ENCODE measurements at regions of chr5 and their contacts with region 1.

Region 1: DNA sequence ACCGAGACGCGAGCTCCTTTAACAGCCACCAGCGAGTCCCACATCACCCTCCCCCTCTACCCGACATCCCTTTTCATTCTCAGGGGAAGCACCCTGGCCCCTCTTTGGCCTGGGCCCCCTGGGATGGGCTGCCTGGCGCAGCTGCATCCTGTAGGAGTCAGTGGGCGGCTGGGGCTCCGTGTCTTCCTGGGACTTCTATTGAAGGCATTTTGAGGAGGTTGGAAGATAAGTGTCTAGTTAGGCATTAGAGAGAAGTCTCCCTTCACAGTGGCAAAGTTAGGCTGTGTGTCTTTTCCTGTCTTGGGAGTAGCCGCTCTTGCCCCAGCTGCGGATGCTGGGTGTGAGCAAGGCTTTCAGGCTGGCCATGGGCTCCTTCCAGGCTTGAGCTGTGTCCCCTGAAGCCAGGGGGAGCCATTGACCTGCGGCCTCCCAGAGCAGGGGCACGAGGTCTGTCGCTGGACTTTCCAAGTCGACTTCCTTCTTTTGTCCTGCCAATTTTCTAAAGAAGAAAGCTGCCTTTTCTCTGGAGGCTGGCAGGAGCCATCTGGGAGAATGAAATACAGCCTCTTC is 18.6 kb upstream of the NKD2 start:
- DNase-seq: peak in 1 of 2 experiments; percentile 54
- H3K4me3 ChIP-seq: no peak overlapping the region
- H3K27ac ChIP-seq: no peak overlapping the region
- H3K4me1 ChIP-seq: no peaks in the 10 kb centered on the region
- H3K27me3 ChIP-seq: no peaks in the 10 kb centered on the region
- CTCF ChIP-seq: peak; percentile 64 to 68 (median 67)
- EP300 ChIP-seq: no peak
- POLR2A ChIP-seq: no peak
- RAD21 ChIP-seq: peak; percentile 64 to 81

Region 2: DNA sequence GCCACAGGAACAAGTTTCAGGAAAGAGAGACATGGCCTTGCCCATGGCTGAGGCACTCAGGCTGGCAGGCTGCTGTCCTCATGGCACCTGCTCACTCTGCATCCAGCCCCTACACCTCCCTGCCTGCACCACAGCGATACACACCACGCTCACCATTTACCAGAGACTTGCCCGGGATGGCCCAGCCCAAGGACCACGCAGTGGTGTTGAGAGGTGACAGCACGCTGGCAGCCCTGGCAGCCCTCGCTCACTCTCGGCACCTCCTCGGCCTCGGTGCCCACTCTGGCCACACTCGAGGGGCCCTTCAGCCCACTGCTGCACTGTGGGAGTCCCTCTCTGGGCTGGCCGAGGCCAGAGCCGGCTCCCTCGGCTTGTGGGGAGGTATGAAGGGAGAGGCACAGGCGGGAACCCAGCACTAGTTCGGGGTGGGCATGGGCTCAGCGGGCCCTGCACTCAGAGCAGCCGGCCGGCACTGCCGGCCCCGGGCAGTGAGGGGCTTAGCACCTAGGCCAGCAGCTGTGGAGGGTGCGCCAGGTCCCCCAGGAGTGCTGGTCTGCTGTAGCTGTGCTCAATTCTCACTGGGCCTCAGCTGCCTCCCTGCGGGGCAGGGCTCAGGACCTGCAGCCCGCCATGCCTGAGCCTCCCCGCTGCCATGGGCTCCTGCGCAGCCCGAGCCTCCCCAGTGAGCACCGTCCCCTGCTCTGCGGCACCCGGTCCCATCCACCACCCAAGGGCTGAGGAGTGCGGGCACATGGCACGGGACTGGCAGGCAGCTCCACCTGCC is 225.9 kb before region 1 on chr5:
- CTCF ChIA-PET with region 1: no interaction called
- POLR2A ChIA-PET with region 1: no interaction called
- DNase-seq: no peak
- H3K4me3 ChIP-seq: no peak overlapping the region
- H3K27ac ChIP-seq: no peak overlapping the region
- H3K4me1 ChIP-seq: no peaks in the 10 kb centered on the region; a peak in 1 of 7 replicates
- H3K27me3 ChIP-seq: no peaks in the 10 kb centered on the region; a peak in 1 of 7 replicates
- CTCF ChIP-seq: no peak
- EP300 ChIP-seq: no peak
- POLR2A ChIP-seq: no peak
- RAD21 ChIP-seq: no peak

Region 3: GRCh38 chr5:801472-801871 is 188.6 kb before region 1 on chr5:
- CTCF ChIA-PET with region 1: no interaction called
- POLR2A ChIA-PET with region 1: no interaction called
- DNase-seq: no peak
- H3K4me3 ChIP-seq: no peak overlapping the region
- H3K27ac ChIP-seq: no peak overlapping the region
- H3K4me1 ChIP-seq: peaks cover 0 to 3% (median under 1%) of the 10 kb centered on the region in 4 experiments; a peak in 1 of 7 replicates
- H3K27me3 ChIP-seq: peaks cover 0 to 1% (median 0%) of the 10 kb centered on the region in 4 experiments; a peak in 1 of 7 replicates
- CTCF ChIP-seq: no peak
- EP300 ChIP-seq: no peak
- POLR2A ChIP-seq: no peak
- RAD21 ChIP-seq: no peak

Region 4: DNA sequence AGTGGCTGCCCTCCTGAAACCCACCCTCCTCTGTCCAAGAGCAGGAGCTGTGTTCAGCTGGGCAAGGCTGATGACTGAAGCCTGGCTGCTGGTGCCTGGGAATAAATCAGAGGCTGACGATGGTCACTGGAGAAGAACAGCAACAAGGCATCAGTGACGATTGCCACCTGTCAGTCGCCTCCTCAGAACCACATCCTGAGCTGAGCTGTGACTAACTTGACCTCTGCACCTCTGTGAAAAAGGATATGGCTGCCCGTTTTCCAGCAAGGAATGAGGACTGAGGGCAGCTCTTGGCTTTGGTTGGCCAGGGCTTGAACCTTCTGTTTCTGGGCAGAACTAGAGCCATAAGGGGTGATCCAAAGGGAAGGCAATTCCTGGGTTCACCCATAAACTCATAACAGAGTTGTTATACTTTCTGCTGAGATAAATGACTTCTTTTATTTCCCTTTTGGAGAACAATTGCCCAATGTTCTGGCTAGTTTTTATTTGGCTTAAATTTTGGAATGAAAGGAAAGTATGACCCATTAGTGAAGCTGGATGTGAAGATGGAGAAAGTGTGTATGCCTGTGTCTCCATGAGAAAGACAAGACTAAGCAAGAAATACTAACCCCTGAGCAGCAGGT is 57.3 kb before region 1 on chr5:
- CTCF ChIA-PET with region 1: interaction called, 10 read pairs
- POLR2A ChIA-PET with region 1: no interaction called
- DNase-seq: no peak
- H3K4me3 ChIP-seq: no peak overlapping the region
- H3K27ac ChIP-seq: no peak overlapping the region
- H3K4me1 ChIP-seq: no peaks in the 10 kb centered on the region
- H3K27me3 ChIP-seq: no peaks in the 10 kb centered on the region
- CTCF ChIP-seq: no peak
- EP300 ChIP-seq: no peak
- POLR2A ChIP-seq: no peak
- RAD21 ChIP-seq: no peak

Region 5: DNA sequence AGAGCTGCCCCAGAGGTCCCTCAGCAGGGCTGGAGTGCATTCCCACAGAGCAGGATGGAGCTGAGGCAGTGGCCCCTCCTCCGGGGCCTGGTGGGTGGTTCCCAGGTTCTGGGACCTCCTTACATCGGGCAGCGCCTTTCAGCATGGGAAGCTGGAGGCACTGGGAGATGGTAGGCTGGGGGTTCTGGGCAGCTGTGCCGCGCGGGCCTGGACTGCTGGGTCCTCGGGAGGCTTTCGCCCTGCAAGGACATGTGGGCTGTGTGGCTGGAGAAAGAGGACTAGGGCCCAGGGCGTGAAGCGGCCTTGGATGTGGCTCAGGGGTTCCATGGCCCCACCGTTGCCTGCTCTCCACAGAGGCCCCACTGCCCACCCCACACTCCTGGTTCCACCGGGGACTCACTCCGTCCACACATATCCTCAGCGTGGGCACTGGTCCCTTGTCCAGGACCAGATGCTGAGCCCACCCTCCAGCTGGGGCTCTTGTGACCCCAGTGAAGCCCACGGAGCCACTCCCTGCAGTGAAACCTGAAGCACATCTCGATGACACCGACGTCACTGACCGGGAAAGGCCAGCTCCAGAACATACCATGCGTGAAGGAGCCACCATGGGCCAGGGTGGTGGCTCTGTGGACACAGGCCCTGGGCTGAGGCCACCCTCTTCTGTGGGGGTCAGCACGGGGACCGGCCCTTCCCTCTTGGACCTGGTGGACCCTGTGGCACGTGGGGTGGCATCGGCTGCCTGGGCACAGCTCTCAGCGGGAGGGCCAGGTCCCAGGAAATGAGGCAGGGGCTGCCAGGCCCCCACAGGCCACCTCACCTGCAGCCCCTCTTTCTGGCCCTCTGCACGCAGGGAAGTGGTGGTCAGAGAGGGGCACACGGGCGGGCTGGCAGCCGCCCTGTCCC is 12.9 kb before region 1 on chr5:
- CTCF ChIA-PET with region 1: interaction called, 25 read pairs
- POLR2A ChIA-PET with region 1: interaction called, 3 read pairs
- DNase-seq: no peak
- H3K4me3 ChIP-seq: no peak overlapping the region
- H3K27ac ChIP-seq: no peak overlapping the region
- H3K4me1 ChIP-seq: no peaks in the 10 kb centered on the region
- H3K27me3 ChIP-seq: no peaks in the 10 kb centered on the region
- CTCF ChIP-seq: no peak
- EP300 ChIP-seq: no peak
- POLR2A ChIP-seq: no peak
- RAD21 ChIP-seq: no peak

Region 6: DNA sequence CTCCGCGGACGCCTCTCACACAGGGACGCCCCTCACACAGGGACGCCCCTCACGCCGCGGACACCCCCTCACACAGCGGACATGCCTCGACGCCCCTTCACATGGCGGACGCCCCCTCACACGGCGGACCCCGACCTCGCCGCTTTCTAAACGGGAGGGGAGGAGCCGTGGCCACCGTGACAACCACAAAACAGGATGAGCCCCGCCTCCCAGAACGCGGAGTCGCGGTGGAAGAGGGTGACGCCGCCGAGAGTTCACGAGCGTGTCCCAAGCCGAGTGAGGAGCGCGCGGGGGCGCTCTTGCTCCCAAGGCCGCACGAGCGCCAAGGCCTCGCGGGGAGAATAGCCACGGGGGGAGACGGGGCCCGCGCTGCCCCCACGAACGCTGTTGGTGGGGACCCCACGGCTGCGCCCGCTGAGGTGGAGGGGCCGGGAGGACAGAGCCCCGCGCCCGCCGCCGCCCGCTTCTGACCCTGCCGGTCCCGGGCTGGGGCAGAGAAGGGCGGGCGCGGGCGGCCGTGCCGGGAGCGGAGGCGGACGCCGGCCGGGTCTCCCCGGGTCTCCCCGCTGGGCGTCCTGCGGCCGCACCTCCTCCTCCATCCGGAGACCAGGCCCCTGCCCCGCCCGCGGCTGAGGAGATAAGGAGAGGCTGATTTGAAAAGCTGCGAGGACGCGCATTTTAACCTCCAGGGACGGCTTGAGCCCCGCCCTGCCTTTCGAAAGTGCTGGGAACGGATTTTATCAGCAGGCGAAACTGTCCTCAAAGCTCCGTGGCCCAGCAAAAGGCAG is 14.6 kb after region 1 on chr5:
- CTCF ChIA-PET with region 1: interaction called, 71 read pairs
- POLR2A ChIA-PET with region 1: no interaction called
- DNase-seq: peak in 1 of 2 experiments; percentile 73
- H3K4me3 ChIP-seq: peak overlapping the region; percentile 26 to 69 (median 36)
- H3K27ac ChIP-seq: no peak overlapping the region
- H3K4me1 ChIP-seq: peaks cover 0 to 13% (median 3%) of the 10 kb centered on the region in 4 experiments; a peak in 4 of 7 replicates
- H3K27me3 ChIP-seq: peaks cover 18 to 56% (median 52%) of the 10 kb centered on the region in 4 experiments
- CTCF ChIP-seq: no peak; a peak in 1 of 4 replicates
- EP300 ChIP-seq: no peak
- POLR2A ChIP-seq: no peak
- RAD21 ChIP-seq: no peak

Region 7: GRCh38 chr5:1021136-1021968 is 31.3 kb after region 1 on chr5:
- CTCF ChIA-PET with region 1: interaction called, 15 read pairs
- POLR2A ChIA-PET with region 1: no interaction called
- DNase-seq: no peak
- H3K4me3 ChIP-seq: no peak overlapping the region
- H3K27ac ChIP-seq: no peak overlapping the region
- H3K4me1 ChIP-seq: peaks cover 0 to 12% (median 5%) of the 10 kb centered on the region in 4 experiments; a peak in 4 of 7 replicates
- H3K27me3 ChIP-seq: no peaks in the 10 kb centered on the region
- CTCF ChIP-seq: no peak
- EP300 ChIP-seq: no peak
- POLR2A ChIP-seq: no peak
- RAD21 ChIP-seq: no peak

Measured in H1 (cell line).